ENCODE measurements at regions of chr3 and their contacts with region 1.

Region 1: DNA sequence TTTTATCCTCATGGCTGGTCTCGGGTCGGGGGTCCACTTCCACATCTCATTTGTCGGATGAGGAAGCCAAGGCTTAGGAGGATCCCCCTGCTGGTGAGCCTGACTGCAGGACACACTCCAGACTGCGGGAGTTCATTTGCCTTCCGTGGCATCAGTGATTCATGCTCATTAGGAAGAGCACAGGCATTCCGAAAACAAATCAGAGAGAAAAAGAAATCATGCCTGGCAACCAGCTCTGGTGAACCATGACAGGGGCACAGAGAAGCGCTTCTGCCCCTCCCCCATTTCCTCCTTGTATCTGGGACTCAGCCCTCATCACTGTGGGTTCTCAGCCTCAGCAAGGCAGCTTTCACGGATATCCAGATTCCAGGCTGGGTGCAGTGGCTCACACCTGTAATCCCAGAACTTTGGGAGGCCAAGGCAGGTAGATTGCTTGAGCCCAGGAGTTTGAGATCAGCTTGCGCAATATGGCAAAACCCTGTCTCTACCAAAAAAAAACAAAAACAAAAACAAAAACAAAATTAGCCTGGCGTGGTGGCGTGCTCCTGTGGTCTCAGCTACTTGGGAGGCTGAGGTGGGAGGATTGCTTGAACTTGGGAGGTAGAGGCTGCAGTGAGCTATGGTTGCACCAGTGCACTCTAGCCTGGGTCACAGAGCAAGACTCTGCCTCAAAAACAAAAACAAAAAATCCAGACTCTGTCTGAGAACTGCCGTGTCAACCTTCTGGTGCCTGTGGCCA is 28.4 kb downstream of the IRAK2 start:
- DNase-seq: peak in 1 of 2 donors; percentile 75
- ATAC-seq: no peak
- H3K4me3 ChIP-seq: no peak overlapping the region
- H3K27ac ChIP-seq: peak overlapping the region; percentile 43 to 95
- H3K4me1 ChIP-seq: peaks cover 12 to 18% of the 10 kb centered on the region in 2 donors
- H3K27me3 ChIP-seq: no peaks in the 10 kb centered on the region

Region 2: DNA sequence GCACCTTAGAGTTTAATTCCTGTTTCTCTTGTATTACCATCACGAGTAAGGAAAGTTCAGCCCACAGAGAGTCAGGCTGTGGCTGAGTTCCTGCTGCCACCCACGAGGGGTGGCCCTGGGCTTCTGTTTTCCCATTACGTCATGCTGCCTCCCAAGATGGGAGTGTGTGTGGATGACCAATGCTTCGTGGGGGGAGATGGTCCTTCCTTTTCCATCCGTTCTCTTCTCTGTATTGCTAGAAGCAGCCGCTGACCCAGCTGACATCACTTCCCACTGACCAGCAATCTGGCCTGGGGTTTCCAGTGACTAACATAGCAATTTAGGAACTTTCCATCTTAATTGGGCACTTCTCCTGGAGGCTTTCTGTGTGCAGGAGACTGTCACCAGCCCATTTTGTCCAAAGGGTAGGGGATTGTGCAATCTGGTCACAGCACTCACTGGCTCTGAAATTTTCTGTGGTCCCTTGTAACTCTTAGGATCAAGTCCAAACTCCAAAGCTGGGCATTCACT is 19.1 kb before region 1 on chr3:
- intact Hi-C with region 1: loop called in 1 of 2 experiments (anchors 1 kb)
- DNase-seq: peak; percentile 92 to 95
- ATAC-seq: peak; percentile 93
- H3K4me3 ChIP-seq: no peak overlapping the region
- H3K27ac ChIP-seq: peak overlapping the region; percentile 69 to 97
- H3K4me1 ChIP-seq: peaks cover 0 to 5% of the 10 kb centered on the region in 2 donors
- H3K27me3 ChIP-seq: no peaks in the 10 kb centered on the region

Region 3: DNA sequence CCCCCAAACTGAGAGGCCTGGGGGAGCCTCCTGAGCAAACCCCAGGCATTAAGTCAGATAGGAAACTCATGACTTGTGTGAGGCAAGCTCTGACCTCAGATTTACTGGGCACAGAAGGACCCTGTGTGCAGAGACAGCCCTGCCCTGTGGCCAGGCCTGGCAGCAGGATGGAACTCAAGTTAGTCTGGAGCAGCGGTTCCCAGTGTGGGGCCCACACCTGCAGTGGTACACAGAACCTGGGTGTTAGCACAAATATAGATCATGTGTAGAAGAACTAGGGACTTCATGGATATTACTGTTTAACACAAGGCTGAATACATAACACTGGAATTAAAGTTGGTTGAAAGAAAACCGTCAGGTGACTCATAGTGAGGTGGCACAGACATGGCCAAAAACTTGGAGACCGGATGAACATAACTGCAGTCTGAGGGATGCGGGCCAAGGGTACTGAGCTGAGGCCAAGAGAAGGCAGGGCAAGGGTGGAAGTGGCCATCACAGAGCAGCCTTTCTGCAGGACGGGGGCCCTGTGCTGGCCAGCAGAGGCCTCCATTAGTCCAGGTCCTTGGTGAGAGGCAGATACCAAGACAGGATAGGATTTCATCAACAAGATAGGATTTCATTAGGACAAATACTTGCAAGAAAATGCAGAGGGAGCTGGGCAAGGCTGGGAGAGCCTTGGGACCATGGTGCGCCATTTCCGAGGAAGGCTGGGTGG is 12.5 kb after region 1 on chr3:
- intact Hi-C with region 1: loop called in 1 of 2 experiments (anchors 1 kb)
- DNase-seq: peak; percentile 91 to 93
- ATAC-seq: peak; percentile 82
- H3K4me3 ChIP-seq: no peak overlapping the region
- H3K27ac ChIP-seq: peak overlapping the region; percentile 62 to 79
- H3K4me1 ChIP-seq: peaks cover 0 to 4% of the 10 kb centered on the region in 2 donors
- H3K27me3 ChIP-seq: no peaks in the 10 kb centered on the region

Region 4: DNA sequence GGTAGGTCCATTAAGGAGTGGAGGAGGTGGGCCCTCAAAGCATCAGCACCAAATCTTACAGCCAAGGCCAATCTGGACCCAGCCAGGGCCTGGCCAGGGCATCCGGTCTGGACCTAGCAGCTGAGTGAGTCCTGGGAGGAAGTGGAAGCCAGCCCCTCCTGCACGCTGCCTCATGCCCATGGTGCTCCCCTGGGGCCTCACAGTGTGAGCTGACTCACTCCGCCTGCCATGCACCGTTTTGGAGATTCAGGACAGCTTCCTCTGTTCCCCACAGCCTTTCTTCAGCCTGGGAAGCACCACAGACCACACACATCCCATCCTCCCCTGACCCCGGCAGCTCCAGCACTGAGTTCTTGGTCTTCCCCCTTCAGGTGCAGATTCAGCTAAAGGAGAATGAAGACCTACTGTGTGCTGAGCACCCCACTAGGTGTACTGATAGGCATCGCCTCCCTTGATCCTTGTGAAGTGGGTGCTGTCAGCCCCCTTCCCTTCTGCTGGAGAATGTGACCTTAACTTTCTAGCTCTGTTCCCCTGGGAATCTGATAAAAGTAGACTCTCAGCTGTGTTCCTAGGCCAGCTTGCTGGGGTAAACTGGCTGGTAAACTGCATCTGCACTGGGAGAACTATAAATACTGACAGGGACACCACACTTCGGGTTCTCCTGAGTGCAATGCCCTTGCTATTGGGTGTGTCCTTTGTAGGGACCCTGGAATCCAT is 164.6 kb after region 1 on chr3:
- intact Hi-C with region 1: no loop called
- DNase-seq: peak; percentile 83 to 88
- ATAC-seq: peak; percentile 80
- H3K4me3 ChIP-seq: no peak overlapping the region
- H3K27ac ChIP-seq: peak overlapping the region in 1 of 2 donors; percentile 21
- H3K4me1 ChIP-seq: no peaks in the 10 kb centered on the region
- H3K27me3 ChIP-seq: no peaks in the 10 kb centered on the region